ENCODE measurements at regions of chr18 and their contacts with region 1.

Region 1: GRCh38 chr18:23356915-23357601 is 96.0 kb upstream of the RIOK3 start:
- DNase-seq: no peak
- ATAC-seq: peak; percentile 33

Region 2: GRCh38 chr18:23032030-23032582 is 325.0 kb before region 1 on chr18:
- intact Hi-C with region 1: loop called (anchors 5 kb)
- DNase-seq: no peak
- ATAC-seq: no peak

Region 3: GRCh38 chr18:23231340-23232021 is 125.6 kb before region 1 on chr18:
- intact Hi-C with region 1: loop called (anchors 10 kb)
- DNase-seq: peak; percentile 80
- ATAC-seq: peak; percentile 80

Region 4: GRCh38 chr18:23276451-23276850 is 80.6 kb before region 1 on chr18:
- intact Hi-C with region 1: loop called (anchors 5 kb)
- DNase-seq: no peak
- ATAC-seq: peak; percentile 93

Region 5: DNA sequence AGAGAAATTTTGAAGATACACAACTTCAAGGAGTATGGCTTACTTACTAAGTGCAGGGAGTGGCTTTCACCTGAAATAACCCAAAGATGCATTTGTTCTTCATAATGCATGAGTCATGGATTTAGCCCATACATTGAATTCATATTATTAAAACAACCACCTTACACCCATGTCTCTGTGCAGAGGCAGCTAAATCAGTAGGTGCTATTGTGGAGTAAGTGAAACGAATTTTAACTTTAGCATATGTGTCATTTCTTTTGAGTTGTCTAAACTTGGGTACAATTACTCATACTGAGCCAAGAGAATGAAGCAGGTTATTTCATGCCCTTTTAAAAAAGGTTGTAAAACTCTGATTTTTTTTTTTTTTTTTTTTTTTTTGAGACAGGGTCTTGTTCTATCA is 316.7 kb after region 1 on chr18:
- intact Hi-C with region 1: no loop called
- DNase-seq: no peak
- ATAC-seq: no peak